GM12878 (cell line): ENCODE measurements at regions of chr19 and their contacts with region 1.

Region 1: GRCh38 chr19:29941828-29942403 is at the start of gene URI1:
- DNase-seq: no peak
- ATAC-seq: peak; percentile 85
- H3K4me3 ChIP-seq: peak within 1 kb of the TSS; percentile 97
- H3K27ac ChIP-seq: peak within 1 kb of the TSS; percentile 84
- H3K4me1 ChIP-seq: peaks cover 3% of the 10 kb centered on the region; the same call in 1 of the 2 replicates
- H3K27me3 ChIP-seq: no peaks in the 10 kb centered on the region
- CTCF ChIP-seq: no peak
- EP300 ChIP-seq: no peak
- POLR2A ChIP-seq: peak; percentile 78
- RAD21 ChIP-seq: no peak
- polyA plus RNA-seq, gene URI1: 19.6 to 30.4 TPM

Region 2: GRCh38 chr19:29927944-29928625 is 13.8 kb before region 1 on chr19:
- CTCF ChIA-PET with region 1: interaction called, 5 read pairs
- POLR2A ChIA-PET with region 1: interaction called, 9 read pairs
- RAD21 ChIA-PET with region 1: interaction called, 4 read pairs
- SMC1A ChIA-PET with region 1: interaction called, 12 read pairs
- in situ Hi-C with region 1: no loop called
- intact Hi-C with region 1: no loop called
- DNase-seq: peak; percentile 46
- ATAC-seq: peak; percentile 90
- H3K4me3 ChIP-seq: peak overlapping the region; percentile 41; the same call in 1 of the 2 replicates
- H3K27ac ChIP-seq: peak overlapping the region; percentile 63
- H3K4me1 ChIP-seq: peaks cover 12% of the 10 kb centered on the region
- H3K27me3 ChIP-seq: no peaks in the 10 kb centered on the region
- CTCF ChIP-seq: no peak
- EP300 ChIP-seq: no peak; a peak in 1 of 4 replicates
- POLR2A ChIP-seq: no peak
- RAD21 ChIP-seq: no peak

Region 3: GRCh38 chr19:29956855-29957254 is 14.9 kb after region 1 on chr19:
- CTCF ChIA-PET with region 1: interaction called, 9 read pairs
- POLR2A ChIA-PET with region 1: interaction called, 4 read pairs
- RAD21 ChIA-PET with region 1: no interaction called
- SMC1A ChIA-PET with region 1: interaction called, 26 read pairs
- in situ Hi-C with region 1: no loop called
- intact Hi-C with region 1: no loop called
- DNase-seq: no peak
- ATAC-seq: no peak
- H3K4me3 ChIP-seq: no peak overlapping the region
- H3K27ac ChIP-seq: no peak overlapping the region
- H3K4me1 ChIP-seq: peaks cover 11% of the 10 kb centered on the region; the same call in 1 of the 2 replicates
- H3K27me3 ChIP-seq: no peaks in the 10 kb centered on the region
- CTCF ChIP-seq: no peak
- EP300 ChIP-seq: no peak
- POLR2A ChIP-seq: no peak
- RAD21 ChIP-seq: no peak

Region 4: GRCh38 chr19:30029721-30030510 is 88.0 kb after region 1 on chr19:
- CTCF ChIA-PET with region 1: interaction called, 3 read pairs
- POLR2A ChIA-PET with region 1: no interaction called
- RAD21 ChIA-PET with region 1: interaction called, 5 read pairs
- SMC1A ChIA-PET with region 1: interaction called, 6 read pairs
- in situ Hi-C with region 1: no loop called
- intact Hi-C with region 1: loop called (anchors 5 kb)
- DNase-seq: peak; percentile 90
- ATAC-seq: peak; percentile 97
- H3K4me3 ChIP-seq: no peak overlapping the region
- H3K27ac ChIP-seq: peak overlapping the region; percentile 85
- H3K4me1 ChIP-seq: peaks cover 18% of the 10 kb centered on the region; the same call in 1 of the 2 replicates
- H3K27me3 ChIP-seq: no peaks in the 10 kb centered on the region
- CTCF ChIP-seq: no peak
- EP300 ChIP-seq: peak; percentile 77 to 91
- POLR2A ChIP-seq: no peak
- RAD21 ChIP-seq: no peak